Activated CD4-positive, alpha-beta memory T cell treated with anti-CD3 and anti-CD28 coated beads, Interleukin-2, amount 10 ng/mL, durations not matched to agents 7 days and 5 days (primary cell): ENCODE measurements at regions of chr3 and their contacts with region 1.

Region 1: GRCh38 chr3:11785024-11785377 is 61.7 kb downstream of the TAMM41 start:
- DNase-seq: no peak
- H3K4me3 Mint-ChIP-seq: peak overlapping the region; percentile 58
- H3K27ac Mint-ChIP-seq: peak overlapping the region; percentile 96
- H3K4me1 Mint-ChIP-seq: peaks cover 25% of the 10 kb centered on the region
- H3K27me3 Mint-ChIP-seq: no peaks in the 10 kb centered on the region

Region 2: GRCh38 chr3:11689749-11690148 is 95.3 kb before region 1 on chr3:
- CTCF ChIA-PET with region 1: no interaction called
- POLR2A ChIA-PET with region 1: no interaction called
- DNase-seq: no peak
- H3K4me3 Mint-ChIP-seq: no peak overlapping the region
- H3K27ac Mint-ChIP-seq: no peak overlapping the region
- H3K4me1 Mint-ChIP-seq: no peaks in the 10 kb centered on the region
- H3K27me3 Mint-ChIP-seq: no peaks in the 10 kb centered on the region

Region 3: GRCh38 chr3:11770477-11771391 is 14.3 kb before region 1 on chr3:
- CTCF ChIA-PET with region 1: interaction called, 8 read pairs
- POLR2A ChIA-PET with region 1: interaction called, 32 read pairs
- DNase-seq: peak; percentile 91
- H3K4me3 Mint-ChIP-seq: peak overlapping the region; percentile 26
- H3K27ac Mint-ChIP-seq: peak overlapping the region; percentile 83
- H3K4me1 Mint-ChIP-seq: peaks cover 40% of the 10 kb centered on the region
- H3K27me3 Mint-ChIP-seq: no peaks in the 10 kb centered on the region